Activated CD8-positive, alpha-beta T cell treated with anti-CD3 and anti-CD28 coated beads for 36 hours (primary cell): ENCODE measurements at regions of chr12 and their contacts with region 1.

Region 1: DNA sequence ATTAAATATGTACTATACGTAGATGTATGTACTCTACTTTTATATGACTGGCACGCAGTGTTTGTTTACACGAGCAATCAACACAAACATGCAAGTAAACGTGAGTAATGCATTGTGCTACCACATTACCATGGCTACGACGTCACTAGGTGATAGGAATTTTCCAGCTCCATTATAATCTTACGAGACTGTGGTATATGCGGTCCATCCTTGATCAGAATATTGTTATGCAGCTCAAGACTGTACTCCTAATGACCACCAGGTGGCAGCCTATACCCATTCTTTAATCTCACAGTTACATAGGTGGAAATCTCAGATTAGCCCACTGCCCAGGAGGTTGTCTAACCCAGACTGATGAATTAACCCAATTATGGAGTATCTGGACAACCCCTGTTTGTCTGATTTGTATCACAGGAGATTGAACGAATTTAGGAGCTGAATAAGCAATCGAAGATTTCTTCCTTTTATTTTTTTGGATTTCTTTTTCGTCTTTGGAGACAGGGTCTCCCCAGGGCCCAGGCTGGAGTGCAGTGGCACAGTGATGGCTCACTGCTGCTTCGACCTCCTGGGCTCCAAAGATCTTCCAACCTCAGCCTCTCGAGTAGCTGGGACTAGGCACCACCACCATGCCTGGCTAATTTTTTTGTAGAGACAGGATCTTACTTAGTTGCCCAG is 8.7 kb upstream of the TESPA1 start:
- DNase-seq: peak; percentile 78
- ATAC-seq: peak; percentile 72
- H3K4me3 Mint-ChIP-seq: no peak overlapping the region
- H3K27ac Mint-ChIP-seq: no peak overlapping the region
- H3K4me1 Mint-ChIP-seq: peaks cover 50% of the 10 kb centered on the region
- H3K27me3 Mint-ChIP-seq: no peaks in the 10 kb centered on the region
- CTCF ChIP-seq: peak; percentile 91

Region 2: DNA sequence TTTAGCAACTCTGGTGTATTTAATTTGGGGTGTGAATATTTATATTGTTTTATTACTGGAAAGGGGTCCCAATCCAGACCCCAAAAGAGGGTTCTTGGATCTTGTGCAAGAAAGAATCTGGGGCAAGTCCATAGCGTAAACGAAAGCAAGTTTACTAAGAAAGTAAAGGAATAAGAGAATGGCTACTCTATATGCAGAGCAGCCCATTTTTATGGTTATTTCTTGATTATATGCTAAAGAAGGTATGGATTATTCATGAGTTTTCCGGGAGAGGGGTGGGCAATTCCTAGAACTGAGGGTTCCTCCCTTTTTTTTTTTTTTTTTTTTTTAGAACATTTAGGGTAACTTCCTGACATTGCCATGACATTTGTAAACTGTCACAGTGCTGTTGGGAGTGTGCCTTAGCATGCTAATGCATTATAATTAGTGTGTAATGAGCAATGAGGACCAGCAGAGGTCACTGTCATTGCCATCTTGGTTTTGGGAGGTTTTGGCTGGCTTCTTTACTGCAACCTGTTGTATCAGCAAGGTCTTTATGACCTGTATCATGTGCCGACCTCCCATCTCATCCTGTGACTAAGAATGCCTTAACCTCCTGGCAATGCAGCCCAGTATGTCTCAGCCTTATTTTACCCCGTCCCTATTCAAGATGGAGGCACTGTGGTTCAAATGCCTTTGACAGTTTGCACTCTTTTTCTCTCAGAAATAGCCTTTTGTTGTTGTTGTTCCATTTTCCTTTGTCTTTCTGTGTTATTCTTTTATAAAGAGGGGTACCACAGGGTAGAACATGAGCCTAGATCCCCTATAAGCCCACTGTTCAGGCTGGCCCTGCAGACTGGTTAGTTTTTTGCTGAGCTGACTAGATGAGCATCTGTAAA is 269.7 kb before region 1 on chr12:
- CTCF ChIA-PET with region 1: interaction called, 10 read pairs
- POLR2A ChIA-PET with region 1: interaction called, 4 read pairs
- intact Hi-C with region 1: no loop called
- DNase-seq: peak; percentile 44
- ATAC-seq: peak; percentile 75
- H3K4me3 Mint-ChIP-seq: no peak overlapping the region
- H3K27ac Mint-ChIP-seq: no peak overlapping the region
- H3K4me1 Mint-ChIP-seq: peaks cover 5% of the 10 kb centered on the region
- H3K27me3 Mint-ChIP-seq: peaks cover 1% of the 10 kb centered on the region
- CTCF ChIP-seq: peak; percentile 56

Region 3: GRCh38 chr12:54749191-54749818 is 244.0 kb before region 1 on chr12:
- CTCF ChIA-PET with region 1: interaction called, 56 read pairs
- POLR2A ChIA-PET with region 1: interaction called, 5 read pairs
- intact Hi-C with region 1: loop called (anchors 5 kb)
- DNase-seq: peak; percentile 44
- ATAC-seq: peak; percentile 86
- H3K4me3 Mint-ChIP-seq: peak overlapping the region; percentile 30
- H3K27ac Mint-ChIP-seq: no peak overlapping the region
- H3K4me1 Mint-ChIP-seq: peaks cover 19% of the 10 kb centered on the region
- H3K27me3 Mint-ChIP-seq: no peaks in the 10 kb centered on the region
- CTCF ChIP-seq: peak; percentile 72

Region 4: GRCh38 chr12:54859502-54859901 is 133.8 kb before region 1 on chr12:
- CTCF ChIA-PET with region 1: interaction called, 21 read pairs
- POLR2A ChIA-PET with region 1: no interaction called
- intact Hi-C with region 1: no loop called
- DNase-seq: no peak
- ATAC-seq: no peak
- H3K4me3 Mint-ChIP-seq: no peak overlapping the region
- H3K27ac Mint-ChIP-seq: no peak overlapping the region
- H3K4me1 Mint-ChIP-seq: peaks cover 30% of the 10 kb centered on the region
- H3K27me3 Mint-ChIP-seq: peaks cover 8% of the 10 kb centered on the region
- CTCF ChIP-seq: no peak

Region 5: DNA sequence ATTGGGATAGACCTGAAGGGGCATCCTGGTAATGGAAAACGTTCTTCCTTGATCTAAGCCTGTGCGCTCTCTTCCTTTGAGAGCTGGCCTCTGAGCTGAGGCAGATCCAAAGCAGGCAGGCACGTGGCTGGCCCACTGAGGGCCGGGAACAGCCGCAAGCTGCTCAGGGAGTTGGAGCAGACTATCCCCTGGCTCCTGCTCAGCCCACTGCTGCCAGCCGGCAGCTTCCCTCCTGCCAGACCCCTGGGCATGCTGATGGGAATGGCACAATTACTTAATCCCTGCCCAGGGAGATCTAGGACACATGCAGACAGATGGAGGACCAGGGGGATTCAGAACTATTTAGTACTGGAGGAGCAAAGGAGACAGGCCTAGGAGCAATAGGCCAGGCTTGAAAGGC is 40.9 kb after region 1 on chr12:
- CTCF ChIA-PET with region 1: interaction called, 10 read pairs
- POLR2A ChIA-PET with region 1: no interaction called
- intact Hi-C with region 1: no loop called
- DNase-seq: no peak
- ATAC-seq: no peak
- H3K4me3 Mint-ChIP-seq: no peak overlapping the region
- H3K27ac Mint-ChIP-seq: no peak overlapping the region
- H3K4me1 Mint-ChIP-seq: peaks cover 39% of the 10 kb centered on the region
- H3K27me3 Mint-ChIP-seq: no peaks in the 10 kb centered on the region
- CTCF ChIP-seq: no peak

Region 6: GRCh38 chr12:55051197-55051933 is 58.1 kb after region 1 on chr12:
- CTCF ChIA-PET with region 1: interaction called, 11 read pairs
- POLR2A ChIA-PET with region 1: no interaction called
- intact Hi-C with region 1: no loop called
- DNase-seq: no peak
- ATAC-seq: no peak
- H3K4me3 Mint-ChIP-seq: no peak overlapping the region
- H3K27ac Mint-ChIP-seq: no peak overlapping the region
- H3K4me1 Mint-ChIP-seq: no peaks in the 10 kb centered on the region
- H3K27me3 Mint-ChIP-seq: no peaks in the 10 kb centered on the region
- CTCF ChIP-seq: no peak

Region 7: DNA sequence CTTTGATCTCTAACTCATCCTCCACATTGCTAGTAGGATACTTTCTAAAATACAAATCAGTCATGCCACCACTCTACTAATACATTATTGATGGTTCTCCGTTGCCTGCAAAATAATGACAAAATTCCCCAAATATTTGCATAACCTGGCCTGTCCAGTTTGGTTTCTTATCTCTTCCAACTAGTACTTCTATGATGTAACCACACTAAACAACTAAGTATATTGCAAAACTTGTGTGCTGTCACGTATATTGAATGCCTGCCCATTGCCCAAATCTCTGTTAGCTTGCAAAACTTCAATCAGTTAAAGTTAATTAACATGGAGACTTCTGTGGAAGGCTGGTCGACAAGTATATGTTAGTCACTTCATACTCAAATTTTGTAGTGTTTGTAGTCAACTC is 257.6 kb after region 1 on chr12:
- CTCF ChIA-PET with region 1: no interaction called
- POLR2A ChIA-PET with region 1: no interaction called
- intact Hi-C with region 1: no loop called
- DNase-seq: no peak
- ATAC-seq: no peak
- H3K4me3 Mint-ChIP-seq: no peak overlapping the region
- H3K27ac Mint-ChIP-seq: no peak overlapping the region
- H3K4me1 Mint-ChIP-seq: no peaks in the 10 kb centered on the region
- H3K27me3 Mint-ChIP-seq: peaks cover 16% of the 10 kb centered on the region
- CTCF ChIP-seq: no peak